WTC11 (cell line): ENCODE measurements at regions of chr2 and their contacts with region 1.

Region 1: DNA sequence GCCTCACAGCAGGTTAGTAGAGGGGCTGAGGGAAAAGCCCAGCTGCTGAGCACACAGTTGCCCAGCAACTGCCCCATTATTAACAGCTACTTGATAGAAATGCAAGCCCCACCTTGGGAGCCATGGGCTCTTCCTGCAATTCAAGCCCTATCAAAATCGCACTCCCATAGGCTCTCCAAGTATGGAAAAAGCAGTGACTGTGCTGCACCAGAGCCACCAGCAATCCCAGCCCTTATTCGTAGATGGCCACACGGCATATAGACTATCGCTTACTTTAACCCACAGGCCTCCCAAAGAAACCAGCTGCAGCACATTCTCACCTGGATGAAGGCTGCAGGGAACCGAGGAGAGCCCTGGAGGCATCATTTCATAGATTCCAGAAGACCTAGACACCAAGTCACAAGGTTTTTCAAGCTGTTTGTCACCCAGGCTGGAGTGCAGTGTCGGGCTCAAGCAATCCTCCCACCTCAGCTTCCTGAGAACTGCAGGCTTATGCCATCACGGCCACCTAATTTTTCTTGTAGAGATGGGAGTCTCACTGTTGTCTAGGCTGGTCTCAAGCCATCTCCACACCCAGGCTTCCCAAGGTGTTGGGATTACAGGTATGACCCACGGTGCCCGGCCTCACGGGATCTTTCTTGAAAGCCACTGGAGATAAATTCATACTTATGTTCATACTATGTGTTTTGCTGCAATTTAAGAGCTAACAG is 11.3 kb downstream of the NCL start:
- DNase-seq: no peak
- ATAC-seq: peak; percentile 25
- H3K4me3 Mint-ChIP-seq: no peak overlapping the region
- H3K27ac Mint-ChIP-seq: peak overlapping the region; percentile 93
- H3K4me1 Mint-ChIP-seq: peaks cover 40% of the 10 kb centered on the region
- H3K27me3 Mint-ChIP-seq: no peaks in the 10 kb centered on the region
- CTCF ChIP-seq: no peak

Region 2: DNA sequence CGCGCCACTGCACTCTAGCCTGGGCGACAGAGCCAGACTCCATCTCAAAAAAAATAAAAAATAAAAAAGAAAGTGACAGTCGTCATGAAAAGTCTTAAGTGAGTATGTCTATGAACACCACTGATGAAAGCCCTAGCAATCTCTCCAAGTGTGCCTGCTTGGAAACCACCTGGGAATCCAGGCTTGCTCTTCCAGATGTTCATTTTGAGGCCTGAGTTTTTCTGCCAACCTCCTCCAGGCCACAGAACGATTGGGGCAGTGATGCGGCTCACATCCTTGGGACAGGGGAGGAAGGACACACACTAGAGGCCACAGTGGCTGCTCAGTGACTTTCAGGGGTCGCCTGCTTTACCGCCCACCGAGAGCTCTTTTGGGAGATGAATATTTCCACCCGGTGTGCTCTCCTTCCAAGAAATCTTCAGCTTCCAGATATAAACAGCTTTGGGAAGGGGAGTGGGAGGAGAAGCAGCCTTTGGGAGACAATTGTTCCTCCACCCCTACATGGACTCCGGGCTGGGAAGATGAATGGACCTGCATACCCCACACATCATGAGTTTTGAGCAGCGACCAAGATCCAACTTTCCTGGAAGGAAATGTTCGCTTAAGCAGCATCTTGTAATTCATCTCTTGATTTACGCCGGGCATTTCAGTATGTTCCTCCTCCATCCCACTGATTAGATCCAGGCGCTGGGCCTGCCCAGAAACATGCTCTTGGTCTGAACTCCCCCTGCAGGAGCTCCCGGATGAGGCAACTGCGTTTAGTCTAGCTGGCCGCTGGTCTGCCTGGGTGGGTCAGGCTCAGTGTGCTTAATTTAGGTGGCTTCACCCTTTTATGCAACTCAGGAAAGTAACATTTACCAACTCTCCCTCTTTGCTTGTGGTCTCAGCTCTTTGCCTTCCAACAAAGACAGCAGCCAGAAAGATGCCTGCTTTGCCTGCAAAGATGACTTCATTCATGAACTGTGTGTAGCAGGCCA is 260.8 kb before region 1 on chr2:
- CTCF ChIA-PET with region 1: interaction called, 11 read pairs
- POLR2A ChIA-PET with region 1: interaction called, 5 read pairs
- DNase-seq: peak; percentile 80
- ATAC-seq: peak; percentile 82
- H3K4me3 Mint-ChIP-seq: no peak overlapping the region
- H3K27ac Mint-ChIP-seq: no peak overlapping the region; the same call in 1 of the 2 replicates
- H3K4me1 Mint-ChIP-seq: peaks cover 33% of the 10 kb centered on the region
- H3K27me3 Mint-ChIP-seq: no peaks in the 10 kb centered on the region; the same call in 1 of the 2 replicates
- CTCF ChIP-seq: peak; percentile 39; the same call in 1 of the 2 replicates

Region 3: DNA sequence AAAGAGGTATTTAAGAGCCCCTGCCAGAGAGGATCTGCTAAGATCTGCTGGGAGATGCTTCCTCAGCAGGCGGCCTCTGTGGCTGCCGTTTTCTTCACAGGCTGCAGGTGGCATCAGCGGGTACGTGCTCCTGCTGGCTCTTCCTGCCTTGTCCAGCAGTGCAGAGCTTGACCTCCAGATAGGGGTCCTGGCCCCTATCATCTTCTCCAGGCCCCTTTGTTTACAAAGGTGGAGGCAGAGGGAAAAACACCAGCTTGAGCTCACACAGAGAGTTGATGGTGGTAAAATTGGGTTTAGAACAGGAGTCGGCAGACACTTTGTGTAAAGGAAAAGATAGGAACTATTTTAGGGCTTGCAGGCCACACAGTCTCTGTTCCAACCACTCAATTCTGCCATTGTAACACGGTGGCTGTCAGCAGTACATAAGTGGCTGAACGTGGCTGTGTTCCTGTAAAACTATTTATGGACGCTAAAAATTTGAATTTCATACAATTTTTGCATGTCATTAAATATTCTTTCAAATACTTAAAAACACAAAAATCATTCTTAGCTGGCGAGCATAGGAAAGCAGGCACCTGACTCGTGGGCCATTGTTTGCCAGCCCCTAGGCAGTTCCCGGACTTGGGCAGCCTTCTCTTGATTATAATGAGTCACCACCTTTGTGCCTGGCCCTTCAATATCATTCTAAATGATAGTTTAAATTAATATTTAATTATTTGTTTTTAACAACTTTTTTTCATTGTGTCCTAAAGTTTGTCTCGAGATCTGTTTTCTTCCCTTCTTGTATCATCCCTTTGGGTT is 155.6 kb before region 1 on chr2:
- CTCF ChIA-PET with region 1: interaction called, 10 read pairs
- POLR2A ChIA-PET with region 1: interaction called, 6 read pairs
- DNase-seq: peak; percentile 73
- ATAC-seq: peak; percentile 96
- H3K4me3 Mint-ChIP-seq: no peak overlapping the region
- H3K27ac Mint-ChIP-seq: peak overlapping the region; percentile 94
- H3K4me1 Mint-ChIP-seq: peaks cover 28% of the 10 kb centered on the region
- H3K27me3 Mint-ChIP-seq: no peaks in the 10 kb centered on the region
- CTCF ChIP-seq: 0 out of 2 replicates have a peak, but pooled peaks have one; percentile 35

Region 4: GRCh38 chr2:231399853-231400680 is 52.9 kb before region 1 on chr2:
- CTCF ChIA-PET with region 1: interaction called, 11 read pairs
- POLR2A ChIA-PET with region 1: no interaction called
- DNase-seq: no peak
- ATAC-seq: peak; percentile 16
- H3K4me3 Mint-ChIP-seq: no peak overlapping the region
- H3K27ac Mint-ChIP-seq: peak overlapping the region; percentile 86
- H3K4me1 Mint-ChIP-seq: peaks cover 71% of the 10 kb centered on the region
- H3K27me3 Mint-ChIP-seq: no peaks in the 10 kb centered on the region
- CTCF ChIP-seq: no peak

Region 5: GRCh38 chr2:231463698-231464575 is 11.0 kb after region 1 on chr2 and contains the start of gene NCL:
- CTCF ChIA-PET with region 1: interaction called, 18 read pairs
- POLR2A ChIA-PET with region 1: interaction called, 57 read pairs
- DNase-seq: peak; percentile 84
- ATAC-seq: peak; percentile 94
- H3K4me3 Mint-ChIP-seq: peak within 1 kb of the TSS; percentile 98
- H3K27ac Mint-ChIP-seq: peak within 1 kb of the TSS; percentile 99
- H3K4me1 Mint-ChIP-seq: peaks cover 36% of the 10 kb centered on the region
- H3K27me3 Mint-ChIP-seq: 0 out of 2 replicates have a peak, but pooled peaks cover 3% of the 10 kb centered on the region
- CTCF ChIP-seq: no peak
- total RNA-seq, gene NCL: 944 to 1,223 TPM (median 1,004 TPM) in 3 replicates

Region 6: GRCh38 chr2:231514103-231514950 is 61.4 kb after region 1 on chr2:
- CTCF ChIA-PET with region 1: no interaction called
- POLR2A ChIA-PET with region 1: no interaction called
- DNase-seq: peak; percentile 97
- ATAC-seq: peak; percentile 98
- H3K4me3 Mint-ChIP-seq: peak overlapping the region; percentile 90
- H3K27ac Mint-ChIP-seq: peak overlapping the region; percentile 99
- H3K4me1 Mint-ChIP-seq: peaks cover 22% of the 10 kb centered on the region
- H3K27me3 Mint-ChIP-seq: peaks cover 11% of the 10 kb centered on the region
- CTCF ChIP-seq: no peak

Region 7: DNA sequence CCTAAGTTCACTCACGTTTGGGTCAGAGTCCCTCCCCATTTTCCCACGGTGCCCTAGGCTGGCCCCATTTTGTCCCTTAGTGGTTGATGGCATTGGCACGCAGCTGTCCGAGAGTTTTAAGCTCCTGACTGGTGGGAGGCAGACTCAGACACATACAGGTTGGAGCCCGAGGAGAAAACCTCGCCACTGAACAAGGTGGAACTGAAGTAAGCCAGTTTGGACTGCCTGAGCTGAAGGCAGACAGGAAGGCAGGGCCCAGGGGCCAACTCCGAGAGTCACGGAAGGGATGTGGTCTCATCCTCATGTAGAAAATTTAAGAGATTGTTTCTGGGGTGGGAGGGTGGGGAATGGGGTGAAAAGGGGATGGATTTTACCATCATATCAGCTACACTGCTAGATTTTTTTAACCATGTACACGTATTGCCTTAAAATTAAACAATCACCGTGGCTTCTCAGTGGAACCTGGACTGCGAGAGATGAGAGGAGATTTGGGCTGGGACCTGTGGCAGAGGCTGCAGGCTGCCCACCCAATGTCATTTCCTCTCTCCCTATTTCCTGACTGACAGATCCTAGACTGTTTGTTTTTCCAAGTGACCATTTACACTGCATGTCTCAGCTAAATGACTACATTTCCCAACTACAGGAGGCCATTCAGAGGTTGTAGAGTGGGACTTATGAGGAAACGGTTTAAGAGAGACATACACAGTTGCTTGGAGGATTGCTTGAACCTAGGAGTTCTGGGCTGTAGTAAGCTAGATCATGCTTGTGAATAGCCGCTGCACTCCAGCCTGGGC is 96.7 kb after region 1 on chr2:
- CTCF ChIA-PET with region 1: no interaction called
- POLR2A ChIA-PET with region 1: no interaction called
- DNase-seq: no peak
- ATAC-seq: no peak
- H3K4me3 Mint-ChIP-seq: no peak overlapping the region
- H3K27ac Mint-ChIP-seq: no peak overlapping the region
- H3K4me1 Mint-ChIP-seq: no peaks in the 10 kb centered on the region
- H3K27me3 Mint-ChIP-seq: peaks cover 3% of the 10 kb centered on the region; the same call in 1 of the 2 replicates
- CTCF ChIP-seq: no peak